ENCODE measurements at regions of chr5 and their contacts with region 1.

Region 1: DNA sequence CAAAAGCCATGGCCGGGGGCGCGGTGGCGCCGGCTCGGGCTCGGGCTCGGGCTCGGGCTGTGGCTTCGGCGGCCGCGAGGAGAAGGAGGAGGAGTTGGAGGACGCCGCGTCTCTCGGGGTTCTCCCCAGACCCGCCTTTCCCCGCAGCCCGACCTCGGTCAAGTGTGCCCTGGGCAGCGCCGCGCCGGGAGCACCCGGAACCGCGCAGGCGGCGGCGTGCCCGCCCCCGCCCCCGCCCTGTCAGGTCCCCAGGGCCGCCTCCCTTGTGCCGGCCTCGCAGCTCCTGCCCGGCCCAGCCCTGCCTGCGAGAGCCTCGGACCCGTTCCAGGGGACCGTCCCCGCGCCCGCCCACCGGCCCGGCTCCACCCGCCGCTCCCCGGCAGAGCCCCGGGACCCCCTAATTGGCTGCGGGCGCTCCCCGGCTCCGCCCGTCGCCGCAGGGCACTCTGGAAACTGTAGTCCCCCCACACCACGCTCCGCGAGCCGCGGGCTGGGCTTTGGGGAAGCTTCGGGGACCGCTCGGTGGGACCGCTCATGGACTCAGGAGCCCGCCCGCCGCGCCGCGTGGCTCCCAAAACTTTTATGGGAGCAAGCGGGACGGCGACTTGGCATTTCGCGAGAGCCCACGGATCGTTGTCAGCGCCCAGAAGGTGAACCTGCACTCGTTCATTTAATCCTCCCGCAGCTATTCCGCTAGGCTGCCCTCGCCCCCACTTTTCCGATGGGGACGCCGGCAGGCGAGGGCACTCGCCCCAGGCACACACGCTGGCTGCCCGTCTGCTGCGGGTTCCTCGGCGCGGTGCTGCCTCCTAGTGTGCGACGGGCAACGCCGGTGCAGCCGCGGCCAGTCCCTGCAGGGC is at the start of gene STK10:
- DNase-seq: peak; percentile 86
- H3K4me3 Mint-ChIP-seq: peak within 1 kb of the TSS; percentile 99
- H3K27ac Mint-ChIP-seq: peak within 1 kb of the TSS; percentile 99
- H3K4me1 Mint-ChIP-seq: peaks cover 38% of the 10 kb centered on the region
- H3K27me3 Mint-ChIP-seq: peaks cover 8% of the 10 kb centered on the region
- total RNA-seq, gene STK10: 88.6 and 91.9 TPM in 2 replicates

Region 2: GRCh38 chr5:171984748-171985419 is 203.4 kb before region 1 on chr5:
- intact Hi-C with region 1: loop called (anchors 5 kb)
- DNase-seq: peak; percentile 49
- H3K4me3 Mint-ChIP-seq: no peak overlapping the region
- H3K27ac Mint-ChIP-seq: peak overlapping the region; percentile 16
- H3K4me1 Mint-ChIP-seq: peaks cover 42% of the 10 kb centered on the region
- H3K27me3 Mint-ChIP-seq: no peaks in the 10 kb centered on the region

Region 3: GRCh38 chr5:172106511-172107356 is 81.5 kb before region 1 on chr5:
- intact Hi-C with region 1: loop called (anchors 1 kb)
- DNase-seq: peak; percentile 40
- H3K4me3 Mint-ChIP-seq: no peak overlapping the region
- H3K27ac Mint-ChIP-seq: peak overlapping the region; percentile 34
- H3K4me1 Mint-ChIP-seq: peaks cover 45% of the 10 kb centered on the region
- H3K27me3 Mint-ChIP-seq: no peaks in the 10 kb centered on the region

Region 4: DNA sequence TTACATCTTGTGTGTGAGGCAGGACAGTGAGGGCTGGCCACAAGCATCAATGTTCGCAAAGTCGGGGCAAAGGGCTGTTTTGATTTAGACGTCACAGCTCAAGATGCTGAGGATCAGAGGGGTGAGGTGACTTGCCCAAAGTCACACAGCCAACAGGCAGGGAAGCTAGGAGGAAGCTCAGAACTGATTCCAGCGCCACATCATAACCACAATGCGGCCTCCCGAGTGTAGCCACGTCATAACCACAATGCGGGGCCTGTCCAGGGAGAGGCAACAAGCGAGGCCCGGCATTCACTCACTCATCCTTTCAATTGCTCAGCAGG is 14.5 kb before region 1 on chr5:
- intact Hi-C with region 1: loop called (anchors 1 kb)
- DNase-seq: peak; percentile 74
- H3K4me3 Mint-ChIP-seq: peak overlapping the region; percentile 87
- H3K27ac Mint-ChIP-seq: peak overlapping the region; percentile 100
- H3K4me1 Mint-ChIP-seq: peaks cover 83% of the 10 kb centered on the region
- H3K27me3 Mint-ChIP-seq: no peaks in the 10 kb centered on the region

Region 5: DNA sequence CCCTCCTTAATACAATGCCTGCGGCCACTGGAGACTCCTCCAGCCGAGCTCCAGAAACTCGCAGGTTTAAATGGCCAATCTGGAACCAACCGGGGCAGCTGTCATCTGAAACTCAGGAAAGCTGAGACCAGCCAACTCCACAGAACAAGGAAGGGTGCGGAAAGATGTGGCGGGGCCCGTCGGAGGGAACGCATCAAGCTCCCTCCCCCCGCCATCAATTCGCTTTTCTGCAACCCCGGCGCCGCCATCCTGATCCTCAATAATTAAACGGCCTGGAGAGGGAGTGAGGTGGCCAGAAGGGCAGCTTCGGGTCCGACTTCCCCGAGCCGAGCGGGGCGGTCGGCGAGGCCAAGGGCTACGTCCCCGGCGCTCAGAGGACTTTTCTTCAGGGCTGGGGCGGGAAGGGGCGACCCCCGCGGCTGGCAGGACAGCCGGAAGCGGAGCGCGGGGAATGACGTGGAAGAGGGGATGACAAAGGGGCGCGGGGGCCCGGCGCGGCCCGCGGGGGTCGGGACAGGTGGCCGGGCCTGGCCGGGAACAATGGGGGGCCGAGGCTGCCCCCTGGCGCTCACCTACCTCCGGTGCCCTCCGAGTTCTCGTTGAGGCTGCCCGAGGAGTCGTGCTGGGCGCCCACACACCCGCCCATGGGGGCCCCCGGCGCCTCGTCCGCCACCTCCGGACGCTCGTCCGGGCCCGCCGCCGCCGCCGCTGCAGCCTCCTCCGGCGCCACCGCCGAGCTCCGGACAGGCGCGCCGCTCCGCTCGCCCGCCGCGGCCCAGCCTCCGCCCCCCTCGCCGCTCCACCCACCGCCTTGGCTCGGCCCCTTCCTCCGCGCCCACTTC is 95.0 kb after region 1 on chr5 and contains the start of gene UBTD2:
- intact Hi-C with region 1: loop called (anchors 1 kb)
- DNase-seq: peak; percentile 74
- H3K4me3 Mint-ChIP-seq: peak within 1 kb of the TSS; percentile 87
- H3K27ac Mint-ChIP-seq: peak within 1 kb of the TSS; percentile 73
- H3K4me1 Mint-ChIP-seq: peaks cover 16% of the 10 kb centered on the region
- H3K27me3 Mint-ChIP-seq: peaks cover 30% of the 10 kb centered on the region
- total RNA-seq, gene UBTD2: 5.0 and 6.1 TPM in 2 replicates

Region 6: GRCh38 chr5:172697123-172698121 is 509.2 kb after region 1 on chr5:
- intact Hi-C with region 1: loop called (anchors 5 kb)
- DNase-seq: peak; percentile 75
- H3K4me3 Mint-ChIP-seq: peak overlapping the region; percentile 82
- H3K27ac Mint-ChIP-seq: peak overlapping the region; percentile 45
- H3K4me1 Mint-ChIP-seq: peaks cover 22% of the 10 kb centered on the region
- H3K27me3 Mint-ChIP-seq: peaks cover 24% of the 10 kb centered on the region